ENCODE measurements at regions of chr3 and their contacts with region 1.

Region 1: DNA sequence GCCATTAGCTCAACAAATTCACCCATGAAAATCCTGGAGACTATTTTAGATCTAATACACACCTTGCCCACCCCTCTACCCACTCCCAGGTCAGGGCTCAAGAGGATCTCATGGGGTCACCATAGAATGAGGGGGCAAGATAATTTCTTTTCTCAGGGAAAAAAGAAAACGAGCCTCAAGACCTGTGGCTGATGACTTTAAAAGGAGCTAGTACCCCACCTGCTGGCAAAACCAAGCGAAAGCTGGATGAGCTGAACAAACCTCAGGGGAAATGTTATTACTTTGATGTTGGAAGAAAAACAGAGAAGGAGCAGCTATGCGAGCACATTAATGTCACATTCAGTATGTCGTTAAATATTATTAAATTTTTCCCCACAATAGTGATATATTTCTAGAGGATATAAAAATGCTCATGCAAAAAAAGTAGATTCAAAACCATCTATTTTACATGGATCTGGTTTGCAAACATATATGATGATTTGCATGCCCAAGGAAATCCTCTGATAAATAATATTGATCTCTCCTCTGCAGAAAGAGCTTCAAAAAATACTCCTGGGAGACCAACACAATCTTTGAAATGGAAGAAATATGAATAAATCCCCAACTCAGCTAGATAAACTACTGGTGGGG is 37.7 kb downstream of the PLD1 start:
- DNase-seq: peak in 4 of 6 donors; percentile 32 to 61 (median 50)
- ATAC-seq: peak; percentile 61 to 73 (median 68)
- H3K4me3 ChIP-seq: no peak overlapping the region
- H3K27ac ChIP-seq: no peak overlapping the region
- H3K4me1 ChIP-seq: peaks cover 0 to 14% (median 8%) of the 10 kb centered on the region in 3 donors
- H3K27me3 ChIP-seq: no peaks in the 10 kb centered on the region
- CTCF ChIP-seq: peak in 3 of 4 donors; percentile 39 to 47 (median 44)

Region 2: DNA sequence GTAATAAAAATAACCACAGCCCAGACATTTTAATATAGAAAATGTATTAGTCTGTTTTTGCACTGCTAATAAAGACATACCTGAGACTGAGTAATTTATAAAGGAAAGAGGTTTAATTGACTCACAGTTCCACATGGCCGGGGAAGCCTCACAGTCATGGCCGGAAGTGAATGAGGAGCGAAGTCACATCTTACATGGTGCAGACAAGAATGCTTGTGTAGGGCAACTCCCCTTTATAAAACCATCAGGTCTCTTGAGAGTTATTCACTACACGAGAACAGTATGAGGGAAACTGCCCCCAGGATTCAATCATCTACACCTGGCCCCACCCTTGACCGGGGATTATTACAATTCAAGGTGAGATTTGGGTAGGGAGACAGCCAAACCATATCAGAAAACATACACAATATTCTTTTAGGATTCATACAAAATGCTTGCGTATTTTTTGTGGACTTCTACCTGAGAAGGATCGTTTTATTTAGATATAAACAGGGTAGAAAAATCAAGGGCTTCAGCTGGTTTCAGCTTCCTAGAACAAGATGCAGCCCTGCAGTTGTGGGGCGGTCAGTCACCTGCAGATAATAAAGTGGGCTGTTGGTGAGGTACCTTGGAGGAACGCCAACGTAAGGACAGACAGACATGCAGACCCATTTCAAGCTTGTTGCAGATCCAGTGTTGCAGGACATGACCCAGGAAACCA is 414.2 kb before region 1 on chr3:
- intact Hi-C with region 1: no loop called
- DNase-seq: no peak
- ATAC-seq: no peak
- H3K4me3 ChIP-seq: no peak overlapping the region
- H3K27ac ChIP-seq: no peak overlapping the region
- H3K4me1 ChIP-seq: peaks cover 11 to 29% (median 24%) of the 10 kb centered on the region in 3 donors
- H3K27me3 ChIP-seq: no peaks in the 10 kb centered on the region
- CTCF ChIP-seq: no peak

Region 3: GRCh38 chr3:171646357-171647133 is 126.0 kb before region 1 on chr3:
- intact Hi-C with region 1: loop called in 1 of 3 experiments (anchors 10 kb)
- DNase-seq: no peak
- ATAC-seq: peak; percentile 56 to 87 (median 84)
- H3K4me3 ChIP-seq: no peak overlapping the region
- H3K27ac ChIP-seq: no peak overlapping the region
- H3K4me1 ChIP-seq: no peaks in the 10 kb centered on the region
- H3K27me3 ChIP-seq: no peaks in the 10 kb centered on the region
- CTCF ChIP-seq: peak in 2 of 4 donors; percentile 26 to 35

Region 4: GRCh38 chr3:171712171-171712938 is 60.2 kb before region 1 on chr3:
- intact Hi-C with region 1: loop called in 1 of 3 experiments (anchors 10 kb)
- DNase-seq: no peak
- ATAC-seq: no peak
- H3K4me3 ChIP-seq: no peak overlapping the region
- H3K27ac ChIP-seq: no peak overlapping the region
- H3K4me1 ChIP-seq: no peaks in the 10 kb centered on the region
- H3K27me3 ChIP-seq: no peaks in the 10 kb centered on the region
- CTCF ChIP-seq: no peak

Measured in pancreas (tissue), 10 donors.